Caco-2 (cell line): ENCODE measurements at regions of chr6 and their contacts with region 1.

Region 1: DNA sequence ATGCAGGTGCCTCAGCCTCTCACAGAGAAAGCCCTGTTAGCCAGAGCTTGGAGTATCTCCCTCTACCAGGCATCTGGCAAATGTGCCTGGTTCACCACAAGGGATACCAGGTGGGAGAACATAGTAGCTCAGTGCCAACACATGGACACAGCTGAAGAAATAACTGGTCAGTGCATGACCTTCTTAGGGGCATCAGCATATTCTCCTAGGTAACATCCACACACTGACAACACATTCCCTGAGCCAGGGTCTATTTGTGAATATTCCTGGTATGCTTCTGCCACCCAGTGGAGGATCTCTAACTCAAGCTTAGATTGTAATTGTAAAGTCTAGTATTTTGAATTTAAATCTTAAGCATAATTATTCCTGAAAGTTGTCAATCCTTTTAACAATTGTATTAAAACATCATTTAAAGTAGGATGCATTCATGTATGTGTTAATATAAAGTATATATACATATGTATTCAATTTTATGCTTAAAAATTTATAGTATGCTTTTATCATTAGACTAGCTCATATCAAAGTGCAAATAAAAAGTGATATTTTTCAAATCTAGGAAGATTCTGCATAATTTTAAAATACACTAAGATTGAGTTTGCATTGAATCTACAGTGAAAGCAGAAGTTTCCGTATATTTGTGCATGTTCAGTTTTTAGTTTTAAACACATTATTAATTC is 45.3 kb upstream of the COL21A1 start:
- DNase-seq: peak; percentile 46 to 56
- H3K4me3 ChIP-seq: no peak overlapping the region
- H3K4me3 Mint-ChIP-seq: no peak overlapping the region
- H3K27ac Mint-ChIP-seq: no peak overlapping the region
- H3K4me1 ChIP-seq: no peaks in the 10 kb centered on the region
- H3K4me1 Mint-ChIP-seq: peaks cover 3% of the 10 kb centered on the region
- H3K27me3 ChIP-seq: no peaks in the 10 kb centered on the region
- H3K27me3 Mint-ChIP-seq: no peaks in the 10 kb centered on the region
- CTCF ChIP-seq: peak; percentile 46 to 57

Region 2: GRCh38 chr6:55980627-55981211 is 311.9 kb before region 1 on chr6:
- CTCF ChIA-PET with region 1: interaction called, 12 read pairs
- POLR2A ChIA-PET with region 1: no interaction called
- intact Hi-C with region 1: loop called (anchors 1 kb)
- DNase-seq: peak in 1 of 2 experiments; percentile 59
- H3K4me3 ChIP-seq: no peak overlapping the region
- H3K4me3 Mint-ChIP-seq: no peak overlapping the region
- H3K27ac Mint-ChIP-seq: no peak overlapping the region
- H3K4me1 ChIP-seq: no peaks in the 10 kb centered on the region
- H3K4me1 Mint-ChIP-seq: no peaks in the 10 kb centered on the region
- H3K27me3 ChIP-seq: no peaks in the 10 kb centered on the region
- H3K27me3 Mint-ChIP-seq: peaks cover 10% of the 10 kb centered on the region
- CTCF ChIP-seq: peak; percentile 65 to 66

Region 3: DNA sequence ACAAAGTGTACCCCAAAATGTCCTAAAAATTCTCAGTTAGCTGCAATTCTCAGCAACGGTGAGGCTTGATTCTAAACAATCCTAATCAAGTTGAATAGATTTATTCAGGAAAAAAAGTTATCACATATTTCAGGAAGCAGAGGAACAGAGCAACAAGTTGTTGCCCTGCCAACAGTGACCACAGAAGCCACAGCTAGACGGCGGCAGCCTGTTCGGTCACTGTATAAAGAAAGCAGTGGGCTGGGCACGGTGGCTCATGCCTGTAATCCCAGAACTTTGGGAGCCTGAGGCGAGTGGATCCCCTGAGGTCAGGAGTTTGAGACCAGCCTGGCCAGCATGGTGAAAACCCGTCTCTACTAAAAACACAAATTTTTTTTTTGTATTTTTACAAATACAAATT is 246.1 kb before region 1 on chr6:
- CTCF ChIA-PET with region 1: no interaction called
- POLR2A ChIA-PET with region 1: no interaction called
- intact Hi-C with region 1: loop called (anchors 1 kb)
- DNase-seq: no peak
- H3K4me3 ChIP-seq: no peak overlapping the region
- H3K4me3 Mint-ChIP-seq: no peak overlapping the region
- H3K27ac Mint-ChIP-seq: no peak overlapping the region
- H3K4me1 ChIP-seq: no peaks in the 10 kb centered on the region
- H3K4me1 Mint-ChIP-seq: no peaks in the 10 kb centered on the region
- H3K27me3 ChIP-seq: no peaks in the 10 kb centered on the region
- H3K27me3 Mint-ChIP-seq: peaks cover 6% of the 10 kb centered on the region
- CTCF ChIP-seq: no peak

Region 4: GRCh38 chr6:56235245-56235644 is 57.4 kb before region 1 on chr6:
- CTCF ChIA-PET with region 1: no interaction called
- POLR2A ChIA-PET with region 1: no interaction called
- intact Hi-C with region 1: no loop called
- DNase-seq: no peak
- H3K4me3 ChIP-seq: no peak overlapping the region
- H3K4me3 Mint-ChIP-seq: no peak overlapping the region
- H3K27ac Mint-ChIP-seq: no peak overlapping the region
- H3K4me1 ChIP-seq: no peaks in the 10 kb centered on the region
- H3K4me1 Mint-ChIP-seq: no peaks in the 10 kb centered on the region
- H3K27me3 ChIP-seq: peaks cover 1% of the 10 kb centered on the region; the same call in 1 of the 2 replicates
- H3K27me3 Mint-ChIP-seq: peaks cover 5% of the 10 kb centered on the region
- CTCF ChIP-seq: no peak